ENCODE measurements at regions of chr14 and their contacts with region 1.

Region 1: GRCh38 chr14:37599507-37600368 is 4.3 kb downstream of the TTC6 start:
- DNase-seq: no peak
- H3K4me3 Mint-ChIP-seq: no peak overlapping the region
- H3K27ac Mint-ChIP-seq: no peak overlapping the region
- H3K4me1 Mint-ChIP-seq: peaks cover 3% of the 10 kb centered on the region
- H3K27me3 Mint-ChIP-seq: peaks cover 62% of the 10 kb centered on the region

Region 2: GRCh38 chr14:37270629-37271028 is 329.1 kb before region 1 on chr14:
- intact Hi-C with region 1: no loop called
- DNase-seq: no peak
- H3K4me3 Mint-ChIP-seq: no peak overlapping the region
- H3K27ac Mint-ChIP-seq: no peak overlapping the region
- H3K4me1 Mint-ChIP-seq: no peaks in the 10 kb centered on the region
- H3K27me3 Mint-ChIP-seq: no peaks in the 10 kb centered on the region

Region 3: GRCh38 chr14:37583359-37584231 is 16.1 kb before region 1 on chr14:
- intact Hi-C with region 1: loop called (anchors 2 kb)
- DNase-seq: no peak
- H3K4me3 Mint-ChIP-seq: no peak overlapping the region
- H3K27ac Mint-ChIP-seq: no peak overlapping the region
- H3K4me1 Mint-ChIP-seq: no peaks in the 10 kb centered on the region
- H3K27me3 Mint-ChIP-seq: peaks cover 39% of the 10 kb centered on the region